Activated B cell treated with CpG ODN at 0.5 μM for 24 hours (primary cell): ENCODE measurements at regions of chr19 and their contacts with region 1.

Region 1: GRCh38 chr19:16495982-16496612 is at the starts of genes C19orf44 and CALR3:
- DNase-seq: peak; percentile 94
- ATAC-seq: peak; percentile 97
- H3K4me3 Mint-ChIP-seq: peak within 1 kb of the TSS; percentile 98
- H3K27ac Mint-ChIP-seq: peak within 1 kb of the TSS; percentile 88
- H3K4me1 Mint-ChIP-seq: peaks cover 19% of the 10 kb centered on the region
- H3K27me3 Mint-ChIP-seq: no peaks in the 10 kb centered on the region
- CTCF ChIP-seq: no peak
- total RNA-seq, gene C19orf44: 5.9 and 7.1 TPM in 2 replicates
- total RNA-seq, gene CALR3: not detected in 2 replicates

Region 2: GRCh38 chr19:16111160-16111908 is 384.8 kb before region 1 on chr19 and contains the start of gene RAB8A:
- CTCF ChIA-PET with region 1: no interaction called
- POLR2A ChIA-PET with region 1: no interaction called
- intact Hi-C with region 1: loop called (anchors 1 kb)
- DNase-seq: peak; percentile 100
- ATAC-seq: peak; percentile 90
- H3K4me3 Mint-ChIP-seq: peak within 1 kb of the TSS; percentile 99
- H3K27ac Mint-ChIP-seq: peak within 1 kb of the TSS; percentile 97
- H3K4me1 Mint-ChIP-seq: peaks cover 46% of the 10 kb centered on the region
- H3K27me3 Mint-ChIP-seq: no peaks in the 10 kb centered on the region
- CTCF ChIP-seq: peak; percentile 73
- total RNA-seq, gene RAB8A: 157 and 171 TPM in 2 replicates

Region 3: GRCh38 chr19:16386614-16387240 is 109.4 kb before region 1 on chr19:
- CTCF ChIA-PET with region 1: no interaction called
- POLR2A ChIA-PET with region 1: no interaction called
- intact Hi-C with region 1: no loop called
- DNase-seq: no peak
- ATAC-seq: no peak
- H3K4me3 Mint-ChIP-seq: no peak overlapping the region
- H3K27ac Mint-ChIP-seq: peak overlapping the region; percentile 27
- H3K4me1 Mint-ChIP-seq: peaks cover 49% of the 10 kb centered on the region
- H3K27me3 Mint-ChIP-seq: no peaks in the 10 kb centered on the region
- CTCF ChIP-seq: no peak

Region 4: DNA sequence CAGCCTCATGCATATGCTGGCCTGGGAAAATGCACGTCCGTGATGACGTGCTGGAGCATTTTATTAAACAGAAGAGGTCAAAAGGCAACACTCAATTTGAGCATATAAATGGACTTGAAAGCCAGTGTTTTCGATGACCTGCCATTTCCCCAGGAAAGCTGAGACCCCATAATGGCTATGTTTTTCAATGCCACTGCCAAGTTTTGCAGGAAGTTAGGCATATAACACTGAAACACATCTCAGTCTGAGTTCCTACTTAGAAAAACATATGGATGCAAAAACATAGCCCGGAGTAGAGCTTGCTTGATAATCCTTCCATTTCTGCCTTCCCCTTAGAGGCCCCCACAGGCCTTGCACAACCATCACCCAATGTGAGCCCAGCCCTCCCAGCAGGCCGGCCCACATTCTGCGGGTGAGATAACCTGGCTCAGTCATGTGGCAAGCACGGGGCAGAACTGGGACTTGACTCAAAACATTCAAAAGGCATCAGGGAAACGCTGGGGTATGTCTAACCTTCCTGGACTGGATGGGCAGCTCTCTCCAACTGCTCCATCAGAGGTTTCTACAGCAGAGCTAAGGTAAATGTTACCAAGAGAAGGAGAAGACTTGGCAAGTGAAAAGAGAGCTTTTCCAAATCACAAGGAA is 49.3 kb before region 1 on chr19:
- CTCF ChIA-PET with region 1: interaction called, 6 read pairs
- POLR2A ChIA-PET with region 1: interaction called, 22 read pairs
- intact Hi-C with region 1: loop called (anchors 1 kb)
- DNase-seq: peak; percentile 52
- ATAC-seq: peak; percentile 43
- H3K4me3 Mint-ChIP-seq: peak overlapping the region; percentile 64
- H3K27ac Mint-ChIP-seq: peak overlapping the region; percentile 95
- H3K4me1 Mint-ChIP-seq: peaks cover 94% of the 10 kb centered on the region
- H3K27me3 Mint-ChIP-seq: no peaks in the 10 kb centered on the region
- CTCF ChIP-seq: no peak

Region 5: DNA sequence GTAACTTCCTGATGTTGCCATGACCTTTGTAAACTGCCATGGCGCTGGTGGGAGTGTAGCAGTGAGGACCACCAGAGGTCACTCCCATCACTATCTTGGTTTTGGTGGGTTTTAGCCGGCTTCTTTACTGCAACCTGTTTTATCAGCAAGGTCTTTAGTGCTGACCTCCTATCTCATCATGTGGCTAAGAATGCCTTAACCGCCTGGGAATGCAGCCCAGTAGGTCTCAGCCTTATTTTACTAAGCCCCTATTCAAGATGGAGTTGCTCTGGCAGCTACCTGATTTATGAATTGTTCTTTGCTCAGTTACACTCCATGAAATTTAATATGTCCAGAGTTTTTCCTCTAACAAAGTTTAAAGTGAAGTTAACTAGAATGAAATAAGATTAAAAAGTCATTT is 19.7 kb before region 1 on chr19:
- CTCF ChIA-PET with region 1: no interaction called
- POLR2A ChIA-PET with region 1: interaction called, 14 read pairs
- intact Hi-C with region 1: loop called (anchors 1 kb)
- DNase-seq: no peak
- ATAC-seq: no peak
- H3K4me3 Mint-ChIP-seq: no peak overlapping the region
- H3K27ac Mint-ChIP-seq: no peak overlapping the region
- H3K4me1 Mint-ChIP-seq: no peaks in the 10 kb centered on the region
- H3K27me3 Mint-ChIP-seq: no peaks in the 10 kb centered on the region
- CTCF ChIP-seq: no peak

Region 6: DNA sequence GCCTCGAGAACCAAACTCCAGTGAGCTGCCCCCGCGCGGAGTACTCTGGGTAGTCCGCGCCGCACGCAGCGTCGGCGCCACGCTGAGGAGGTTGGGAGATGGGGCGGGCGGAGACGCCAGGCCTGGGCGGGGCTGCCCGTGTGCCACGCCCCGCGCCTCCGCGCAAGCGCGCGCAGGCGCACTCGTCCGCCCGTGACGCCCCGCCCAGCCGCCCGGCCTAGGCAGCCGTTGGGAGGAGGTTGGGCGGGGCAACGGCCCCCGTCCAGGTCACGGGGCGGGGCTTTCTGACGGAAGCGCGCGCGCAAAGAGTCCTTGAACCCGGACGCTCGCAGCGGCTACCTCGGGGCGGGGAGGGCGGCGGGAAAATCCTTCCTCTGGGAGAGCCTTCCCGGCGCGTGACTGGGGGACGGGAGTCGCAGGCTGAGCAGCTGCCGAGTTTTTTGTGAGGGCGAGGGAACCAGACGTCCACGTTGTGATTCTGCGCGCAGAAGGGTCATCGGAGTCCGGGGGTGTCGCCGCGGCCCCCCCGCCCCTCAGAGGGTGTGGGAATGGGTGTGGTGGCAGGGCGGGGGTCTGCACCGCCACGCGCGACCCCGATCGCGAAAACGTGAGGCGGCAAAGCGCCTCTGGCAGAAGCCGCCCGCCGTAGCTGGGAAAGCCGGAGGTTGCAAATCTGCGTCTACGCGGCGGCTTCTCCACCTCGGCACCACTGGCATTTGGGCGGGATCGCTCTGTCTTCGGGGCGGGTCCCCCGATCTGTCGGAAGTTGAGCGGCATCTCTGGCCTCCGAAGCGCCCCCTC is 132.3 kb after region 1 on chr19 and contains the start of gene MED26:
- CTCF ChIA-PET with region 1: no interaction called
- POLR2A ChIA-PET with region 1: interaction called, 3 read pairs
- intact Hi-C with region 1: loop called (anchors 1 kb)
- DNase-seq: peak; percentile 93
- ATAC-seq: peak; percentile 94
- H3K4me3 Mint-ChIP-seq: peak within 1 kb of the TSS; percentile 98
- H3K27ac Mint-ChIP-seq: peak within 1 kb of the TSS; percentile 94
- H3K4me1 Mint-ChIP-seq: peaks cover 51% of the 10 kb centered on the region
- H3K27me3 Mint-ChIP-seq: no peaks in the 10 kb centered on the region
- CTCF ChIP-seq: no peak
- total RNA-seq, gene MED26: 32.0 and 36.1 TPM in 2 replicates